ENCODE measurements at regions of chr9 and their contacts with region 1.

Region 1: GRCh38 chr9:27353474-27354229 is 56.7 kb upstream of the EQTN start:
- DNase-seq: no peak
- H3K4me3 ChIP-seq: no peak overlapping the region
- H3K27ac ChIP-seq: peak overlapping the region; percentile 29 to 41
- H3K4me1 ChIP-seq: peaks cover 34% of the 10 kb centered on the region
- H3K27me3 ChIP-seq: no peaks in the 10 kb centered on the region
- CTCF ChIP-seq: no peak
- POLR2A ChIP-seq: no peak

Region 2: DNA sequence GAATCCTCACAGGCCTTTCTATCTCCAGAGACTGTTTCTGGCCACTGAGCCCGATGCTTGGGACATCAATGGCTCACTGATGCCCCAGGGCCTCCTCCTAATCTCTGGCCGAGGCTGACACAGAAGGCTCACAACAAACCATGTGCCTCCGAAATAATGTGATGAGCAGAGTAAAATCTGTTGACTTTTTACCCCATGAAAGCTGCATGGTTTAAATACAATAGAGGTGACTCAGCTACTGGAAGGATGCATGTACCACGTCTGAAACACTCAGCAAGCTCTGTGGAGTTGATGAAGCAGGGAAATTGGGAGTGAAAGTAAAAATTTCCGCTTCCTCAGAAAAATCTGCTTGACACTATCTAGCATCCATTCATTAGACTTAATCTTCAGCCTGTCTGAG is 54.3 kb after region 1 on chr9:
- intact Hi-C with region 1: loop called (anchors 10 kb)
- DNase-seq: no peak
- H3K4me3 ChIP-seq: no peak overlapping the region
- H3K27ac ChIP-seq: no peak overlapping the region
- H3K4me1 ChIP-seq: peaks cover 20% of the 10 kb centered on the region
- H3K27me3 ChIP-seq: no peaks in the 10 kb centered on the region
- CTCF ChIP-seq: no peak
- POLR2A ChIP-seq: no peak

Region 3: DNA sequence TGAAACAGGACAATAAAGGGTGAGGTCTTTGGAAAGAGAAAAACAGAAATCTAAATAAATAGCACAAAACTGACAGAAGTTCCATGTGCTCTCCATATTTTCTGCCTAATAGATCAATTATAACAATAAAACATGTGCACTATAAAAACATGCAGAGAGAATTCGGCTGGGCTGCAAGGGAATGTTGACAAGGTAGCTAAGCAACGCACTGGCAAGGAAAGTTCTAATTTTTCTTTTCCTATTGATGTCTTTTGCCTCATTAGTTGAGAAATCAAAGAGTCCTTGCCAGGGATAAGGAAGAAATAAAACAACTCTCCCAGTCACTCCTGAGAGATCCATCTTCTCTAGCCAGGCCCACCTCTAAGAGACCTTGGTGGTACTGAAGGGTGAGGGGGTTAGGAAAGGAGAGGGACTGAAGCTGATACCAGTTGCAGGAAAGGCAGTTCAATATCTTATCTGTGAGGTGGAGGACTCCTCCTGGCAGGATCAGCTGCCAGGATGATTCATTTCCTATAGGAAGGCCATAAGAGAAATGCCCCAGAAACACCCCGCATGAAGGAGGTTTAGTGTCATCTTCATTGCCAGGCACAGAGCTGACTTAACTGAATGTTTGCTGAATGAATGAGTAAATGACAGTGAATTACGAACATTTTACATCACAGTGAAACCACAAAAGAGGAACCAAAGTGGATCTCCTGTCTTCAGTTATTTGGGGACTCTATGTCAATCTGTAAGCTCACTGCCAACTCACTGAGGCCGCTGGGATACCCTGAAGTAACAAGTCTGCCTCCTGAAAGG is 106.8 kb after region 1 on chr9:
- intact Hi-C with region 1: no loop called
- DNase-seq: no peak
- H3K4me3 ChIP-seq: no peak overlapping the region
- H3K27ac ChIP-seq: peak overlapping the region; percentile 37 to 51
- H3K4me1 ChIP-seq: peaks cover 25% of the 10 kb centered on the region
- H3K27me3 ChIP-seq: no peaks in the 10 kb centered on the region
- CTCF ChIP-seq: no peak
- POLR2A ChIP-seq: no peak